HEK293 (cell line): ENCODE measurements at regions of chr5 and their contacts with region 1.

Region 1: GRCh38 chr5:137629646-137630045 is 106.2 kb downstream of the KLHL3 start:
- H3K4me3 ChIP-seq: no peak overlapping the region
- H3K27ac ChIP-seq: no peak overlapping the region
- H3K4me1 ChIP-seq: no peaks in the 10 kb centered on the region
- CTCF ChIP-seq: peak; percentile 86

Region 2: DNA sequence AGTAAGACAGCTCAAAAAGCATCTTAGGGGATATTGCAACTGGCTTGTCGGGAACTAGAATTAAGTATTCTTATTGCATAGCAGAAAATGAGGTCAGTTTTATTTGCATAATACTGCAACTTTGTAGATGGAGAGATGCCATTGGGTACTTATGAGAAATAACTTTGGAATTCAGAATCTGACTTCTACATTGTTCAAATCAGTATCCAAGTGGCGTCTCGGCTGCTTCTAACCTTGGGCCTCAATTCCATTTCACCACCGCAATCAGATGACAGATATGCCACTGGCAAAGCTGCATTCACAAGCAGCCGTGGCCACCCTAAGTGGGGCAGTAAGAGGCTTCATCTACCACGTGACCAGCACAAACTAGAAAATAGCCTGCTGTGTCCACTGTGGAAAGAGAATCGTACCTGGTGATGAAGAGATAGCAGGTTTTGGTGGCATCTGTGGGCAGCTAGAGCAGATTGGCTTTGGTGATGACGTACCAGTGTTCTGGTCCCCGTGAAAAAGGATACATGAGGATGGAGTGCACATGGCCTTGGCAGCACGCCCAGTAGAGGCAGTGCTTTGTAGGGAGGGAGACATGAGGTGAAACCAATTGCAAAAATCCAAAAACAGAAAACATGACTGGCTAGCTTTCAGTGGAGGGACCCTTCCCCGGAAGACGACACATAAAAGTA is 10.3 kb before region 1 on chr5:
- CTCF ChIA-PET with region 1: interaction called, 13 read pairs
- POLR2A ChIA-PET with region 1: no interaction called
- H3K4me3 ChIP-seq: no peak overlapping the region
- H3K27ac ChIP-seq: no peak overlapping the region
- H3K4me1 ChIP-seq: no peaks in the 10 kb centered on the region
- CTCF ChIP-seq: no peak

Region 3: DNA sequence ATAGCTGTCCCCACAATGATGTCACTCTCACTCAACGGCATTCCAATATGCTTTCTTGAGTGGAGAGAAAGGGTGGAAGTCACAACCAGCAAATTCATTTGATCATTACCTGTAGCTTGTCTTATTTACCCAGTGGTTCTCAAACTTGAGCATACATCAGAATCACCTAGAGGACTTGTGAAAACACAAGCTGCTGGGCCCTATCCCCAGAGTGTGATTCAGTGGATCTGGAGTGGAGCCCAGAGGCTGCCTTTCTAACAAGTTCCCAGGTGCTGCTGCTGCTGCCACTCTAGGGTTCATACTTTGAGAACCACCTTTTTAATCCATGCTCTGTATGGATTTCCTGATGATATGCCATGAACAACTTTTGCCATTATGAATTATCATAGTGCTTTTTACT is 11.5 kb after region 1 on chr5:
- CTCF ChIA-PET with region 1: interaction called, 28 read pairs
- POLR2A ChIA-PET with region 1: no interaction called
- H3K4me3 ChIP-seq: no peak overlapping the region
- H3K27ac ChIP-seq: no peak overlapping the region
- H3K4me1 ChIP-seq: no peaks in the 10 kb centered on the region
- CTCF ChIP-seq: no peak

Region 4: GRCh38 chr5:137735555-137736284 is 106.1 kb after region 1 on chr5 and contains the start of gene KLHL3:
- CTCF ChIA-PET with region 1: interaction called, 87 read pairs
- POLR2A ChIA-PET with region 1: no interaction called
- H3K4me3 ChIP-seq: peak within 1 kb of the TSS; percentile 1
- H3K27ac ChIP-seq: no peak within 1 kb of the TSS
- H3K4me1 ChIP-seq: 0 out of 2 replicates have a peak, but pooled peaks cover 6% of the 10 kb centered on the region
- CTCF ChIP-seq: peak; percentile 69; the same call in 1 of the 2 replicates

Region 5: GRCh38 chr5:137743031-137743640 is 113.5 kb after region 1 on chr5:
- CTCF ChIA-PET with region 1: interaction called, 87 read pairs
- POLR2A ChIA-PET with region 1: interaction called, 3 read pairs
- H3K4me3 ChIP-seq: no peak overlapping the region
- H3K27ac ChIP-seq: no peak overlapping the region
- H3K4me1 ChIP-seq: no peaks in the 10 kb centered on the region
- CTCF ChIP-seq: peak; percentile 45; the same call in 1 of the 2 replicates

Region 6: GRCh38 chr5:138065102-138065501 is 435.5 kb after region 1 on chr5:
- CTCF ChIA-PET with region 1: interaction called, 12 read pairs
- POLR2A ChIA-PET with region 1: no interaction called
- H3K4me3 ChIP-seq: no peak overlapping the region
- H3K27ac ChIP-seq: no peak overlapping the region
- H3K4me1 ChIP-seq: no peaks in the 10 kb centered on the region
- CTCF ChIP-seq: 0 out of 2 replicates have a peak, but pooled peaks have one; percentile 32